Left cardiac atrium (tissue), 4 donors: ENCODE measurements at regions of chr20 and their contacts with region 1.

Region 1: GRCh38 chr20:36439040-36439730 is 102.1 kb upstream of the MYL9 start:
- DNase-seq: peak; percentile 71
- ATAC-seq: peak; percentile 22 to 65

Region 2: DNA sequence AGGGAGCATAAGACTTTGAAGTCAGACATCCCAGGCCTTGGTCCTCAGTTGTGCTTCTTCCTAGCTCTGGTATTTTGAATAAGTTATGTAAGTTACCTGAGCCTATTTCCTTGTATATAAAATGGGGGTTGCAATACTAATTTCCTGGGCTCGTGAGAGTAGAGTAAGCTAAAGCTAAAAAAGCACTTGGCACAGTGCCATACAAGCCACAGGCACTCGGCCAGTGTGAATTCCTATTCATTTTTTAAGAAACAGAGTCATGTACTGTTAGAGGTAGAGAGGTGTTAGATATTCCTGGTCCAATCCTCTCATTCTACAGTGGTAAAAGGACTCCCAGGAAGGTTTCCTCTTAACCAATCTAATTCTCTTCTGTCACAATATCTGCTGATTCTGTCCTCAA is 364.2 kb before region 1 on chr20:
- intact Hi-C with region 1: no loop called
- DNase-seq: no peak
- ATAC-seq: no peak

Region 3: DNA sequence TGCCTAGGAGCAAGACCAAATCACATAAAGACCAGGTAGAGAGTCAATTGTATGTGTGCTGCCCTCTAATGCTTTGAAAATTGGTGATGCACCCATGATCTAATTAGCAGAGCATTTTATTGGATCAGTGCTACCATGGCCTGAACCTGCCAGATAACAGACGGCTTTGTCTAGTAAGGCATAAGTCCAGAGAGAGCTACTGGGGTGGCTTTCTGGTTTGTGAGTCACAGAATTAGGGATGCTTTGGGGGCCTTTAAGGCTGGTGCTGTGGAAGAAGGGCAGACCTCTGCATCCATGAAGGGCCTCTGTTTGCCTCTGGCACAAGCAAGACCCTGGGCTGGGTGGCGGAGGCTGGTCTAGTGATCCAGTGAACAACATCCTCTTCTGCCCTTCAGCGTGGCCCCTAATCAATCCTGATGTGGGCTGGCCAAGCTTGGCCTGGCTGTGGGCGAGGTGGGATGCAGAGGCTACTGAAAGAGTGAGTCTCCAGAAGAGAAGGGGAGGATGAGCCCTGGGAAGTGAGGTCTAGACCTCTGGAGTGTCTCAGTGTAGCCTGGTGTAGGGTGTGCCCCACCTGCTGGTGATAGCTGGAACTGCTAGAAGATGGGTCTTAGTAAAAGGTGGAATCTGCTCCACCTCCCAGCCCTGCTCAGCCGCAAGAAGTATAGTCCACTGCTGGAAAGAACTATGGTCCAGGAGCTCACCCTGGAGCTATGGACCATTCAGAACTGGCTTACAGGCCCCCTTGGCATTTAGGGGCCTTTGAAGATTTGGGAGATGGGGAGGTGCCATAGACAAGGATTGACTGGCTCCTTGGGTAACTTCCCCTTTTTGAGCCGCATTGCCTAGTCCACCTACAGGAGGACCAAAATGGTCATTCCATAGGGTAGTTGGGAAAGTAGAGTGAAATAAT is 239.6 kb before region 1 on chr20:
- intact Hi-C with region 1: loop called in 1 of 2 experiments (anchors 2 kb)
- DNase-seq: peak; percentile 80
- ATAC-seq: peak; percentile 77 to 85

Region 4: GRCh38 chr20:36214684-36215256 is 224.4 kb before region 1 on chr20:
- intact Hi-C with region 1: loop called in 1 of 2 experiments (anchors 5 kb)
- DNase-seq: no peak
- ATAC-seq: peak in 1 of 2 donors; percentile 35

Region 5: GRCh38 chr20:36562724-36563123 is 123.5 kb after region 1 on chr20:
- intact Hi-C with region 1: no loop called
- DNase-seq: no peak
- ATAC-seq: no peak